ENCODE measurements at regions of chr6 and their contacts with region 1.

Region 1: DNA sequence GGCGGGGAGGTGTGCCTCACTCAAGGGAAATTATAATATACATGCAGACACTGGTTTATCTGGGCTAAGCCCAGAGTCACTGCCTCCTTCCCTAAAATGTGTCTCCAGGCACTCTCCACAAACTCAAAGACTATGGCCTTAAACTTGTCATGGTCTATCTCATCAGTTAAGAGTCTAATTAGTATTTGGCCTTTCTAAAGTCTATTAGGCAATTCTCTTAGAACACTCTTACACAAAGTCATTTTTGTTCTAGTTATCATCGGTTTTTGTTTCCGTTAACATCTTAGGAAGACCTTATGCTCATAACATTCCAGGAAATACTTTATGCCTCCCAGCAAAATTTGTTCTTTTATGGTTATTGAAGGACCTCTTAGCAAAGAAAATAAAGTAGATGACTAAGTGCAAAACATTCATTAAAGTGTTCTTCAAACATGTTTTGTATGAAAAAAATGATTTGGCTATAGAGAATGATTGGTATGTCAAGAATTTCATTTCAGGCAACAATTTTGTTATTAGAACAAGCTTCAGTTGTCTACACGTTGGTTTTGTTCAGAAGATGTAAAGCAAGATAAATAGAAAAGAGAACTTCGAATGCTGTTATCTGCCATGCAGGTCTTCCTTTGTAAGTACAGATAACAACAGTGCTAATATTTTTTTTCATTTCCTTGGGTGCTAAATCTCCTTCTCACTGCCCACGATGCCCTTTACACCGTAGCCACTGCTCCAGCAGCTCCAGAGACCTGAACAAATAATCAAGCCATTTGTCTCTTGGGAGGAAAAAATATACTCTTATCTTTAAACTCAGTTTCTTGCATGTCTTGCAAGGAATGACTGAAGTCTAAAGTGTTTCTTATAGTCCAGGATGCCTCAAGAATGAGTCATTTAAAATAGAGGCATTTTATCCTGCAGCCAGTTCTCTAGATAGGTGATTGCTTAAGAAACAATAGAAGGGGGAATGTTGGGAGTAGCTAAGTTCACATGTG is 170.4 kb downstream of the HTR1B start:
- DNase-seq: peak; percentile 80
- ATAC-seq: peak; percentile 82
- H3K4me3 ChIP-seq: no peak overlapping the region
- H3K27ac ChIP-seq: peak overlapping the region; percentile 76
- H3K4me1 ChIP-seq: peaks cover 3% of the 10 kb centered on the region
- H3K27me3 ChIP-seq: no peaks in the 10 kb centered on the region
- CTCF ChIP-seq: no peak
- POLR2A ChIP-seq: no peak
- RAD21 ChIP-seq: no peak

Region 2: GRCh38 chr6:77021232-77021631 is 271.6 kb before region 1 on chr6:
- CTCF ChIA-PET with region 1: no interaction called
- POLR2A ChIA-PET with region 1: no interaction called
- dilution Hi-C with region 1: no loop called
- in situ Hi-C with region 1: no loop called
- intact Hi-C with region 1: loop called (anchors 10 kb)
- DNase-seq: no peak
- ATAC-seq: 0 out of 2 replicates have a peak, but pooled peaks have one; percentile 35
- H3K4me3 ChIP-seq: no peak overlapping the region
- H3K27ac ChIP-seq: no peak overlapping the region
- H3K4me1 ChIP-seq: no peaks in the 10 kb centered on the region
- H3K27me3 ChIP-seq: no peaks in the 10 kb centered on the region
- CTCF ChIP-seq: no peak
- POLR2A ChIP-seq: no peak
- RAD21 ChIP-seq: no peak

Region 3: DNA sequence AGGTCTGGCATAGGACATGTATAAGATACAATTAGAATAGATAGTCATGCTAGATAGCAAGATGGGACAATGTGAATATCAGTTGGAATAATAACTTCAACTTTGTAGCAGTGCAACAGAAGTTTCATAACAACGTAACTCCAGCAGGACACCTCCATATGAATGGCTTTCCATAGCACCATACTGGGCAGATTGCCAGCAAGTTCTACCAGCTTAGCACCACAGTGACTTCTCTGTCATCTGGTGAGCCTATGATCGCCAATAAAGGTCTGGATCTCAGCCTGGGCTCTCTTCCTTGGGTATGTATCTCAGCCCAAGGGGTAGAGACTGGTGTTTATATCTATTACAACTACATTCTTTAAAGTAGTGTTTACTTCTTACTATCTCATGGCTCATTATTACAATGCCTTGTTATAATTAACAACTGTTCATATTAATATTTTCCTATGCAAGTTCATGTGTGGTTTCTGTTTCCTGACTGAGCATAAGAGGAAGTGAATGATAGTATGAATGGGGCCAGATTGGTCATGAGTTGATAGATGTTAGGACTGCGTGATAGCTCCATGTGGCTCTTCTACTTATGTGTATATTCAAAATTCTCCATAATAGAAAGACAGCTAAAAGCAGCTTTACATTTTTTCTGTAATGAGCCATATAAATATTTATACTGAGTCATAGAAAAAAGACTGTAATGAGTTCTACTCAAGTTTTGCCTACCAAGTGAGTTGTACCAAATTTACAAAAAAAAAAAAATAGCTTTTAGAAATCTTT is 147.5 kb after region 1 on chr6:
- CTCF ChIA-PET with region 1: no interaction called
- POLR2A ChIA-PET with region 1: no interaction called
- dilution Hi-C with region 1: no loop called
- in situ Hi-C with region 1: no loop called
- intact Hi-C with region 1: loop called (anchors 2 kb)
- DNase-seq: peak; percentile 94
- ATAC-seq: peak; percentile 93
- H3K4me3 ChIP-seq: no peak overlapping the region
- H3K27ac ChIP-seq: peak overlapping the region; percentile 99
- H3K4me1 ChIP-seq: peaks cover 8% of the 10 kb centered on the region
- H3K27me3 ChIP-seq: no peaks in the 10 kb centered on the region
- CTCF ChIP-seq: no peak
- POLR2A ChIP-seq: no peak
- RAD21 ChIP-seq: no peak

Measured in IMR-90 (cell line).